Vagina (tissue), 2 donors: ENCODE measurements at regions of chr3 and their contacts with region 1.

Region 1: DNA sequence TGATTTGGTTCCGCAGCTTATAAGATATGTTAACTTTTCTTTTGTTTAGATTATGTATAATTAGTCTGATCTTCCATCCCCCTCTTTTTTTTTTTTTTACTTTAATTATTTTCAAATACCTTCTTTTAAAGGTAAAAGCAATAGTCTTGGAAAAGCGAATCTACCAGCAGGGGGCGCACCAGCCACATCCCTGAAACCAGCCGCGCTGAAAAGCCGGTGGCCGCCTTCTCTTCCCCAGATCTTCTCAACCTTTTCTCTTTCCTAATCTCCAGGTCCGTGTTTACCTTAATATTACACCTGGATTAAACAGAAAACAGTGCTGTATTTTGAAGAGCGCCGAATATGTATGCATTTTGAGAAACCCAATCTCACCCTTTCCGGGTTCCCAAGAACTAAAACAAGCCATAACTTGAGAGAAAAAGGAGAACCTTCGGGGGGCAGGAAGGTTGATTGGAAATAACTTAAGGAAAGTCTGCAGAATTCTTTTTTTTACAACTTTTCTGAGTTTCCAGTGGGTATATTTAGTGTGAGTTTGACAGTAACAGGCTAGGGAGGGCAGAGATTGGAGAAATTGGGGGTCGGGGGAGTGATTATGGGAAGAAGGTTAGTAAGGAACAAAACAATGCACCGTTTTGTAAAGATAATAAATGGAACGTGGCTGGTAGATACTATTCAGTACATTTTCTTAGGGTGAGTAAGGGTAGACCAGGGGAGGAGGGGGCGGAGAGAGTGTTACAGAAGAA is 2.0 kb upstream of the SOX2 start:
- DNase-seq: no peak
- H3K4me3 ChIP-seq: no peak overlapping the region
- H3K27ac ChIP-seq: no peak overlapping the region
- H3K4me1 ChIP-seq: peaks cover 25% of the 10 kb centered on the region
- H3K27me3 ChIP-seq: peaks cover 11% of the 10 kb centered on the region
- CTCF ChIP-seq: peak in 2 of 3 experiments; percentile 57 to 68
- POLR2A ChIP-seq: no peak

Region 2: DNA sequence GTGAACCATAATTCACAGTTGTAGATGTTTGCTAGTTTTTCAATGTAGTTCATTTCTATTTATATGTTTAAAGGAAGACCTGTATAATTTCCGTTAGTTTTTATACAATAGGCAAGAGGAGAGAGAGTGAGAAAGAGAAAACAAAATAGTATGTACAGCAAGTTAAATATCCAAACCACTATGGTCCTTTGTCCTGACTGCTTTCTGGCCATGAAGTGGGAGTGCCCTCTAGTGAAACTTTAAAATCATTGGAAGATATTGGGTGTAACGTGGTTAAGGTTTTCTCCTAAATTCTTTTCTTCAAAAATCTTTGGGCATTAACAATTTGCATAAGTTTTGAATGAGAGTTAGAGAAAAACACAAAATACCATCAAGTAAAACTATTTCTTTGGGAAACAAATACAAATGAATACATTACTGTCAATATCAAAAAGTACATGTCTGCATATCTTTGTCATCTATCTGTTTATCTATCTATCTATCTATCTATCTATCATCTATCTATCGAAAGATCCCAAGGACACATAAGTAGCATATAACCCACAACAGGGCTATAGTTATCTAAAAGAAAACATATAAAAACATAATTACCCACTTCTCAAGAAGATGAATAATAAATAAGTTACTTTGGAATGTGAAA is 549.0 kb after region 1 on chr3:
- intact Hi-C with region 1: loop called (anchors 10 kb)
- DNase-seq: no peak
- H3K4me3 ChIP-seq: no peak overlapping the region
- H3K27ac ChIP-seq: no peak overlapping the region
- H3K4me1 ChIP-seq: no peaks in the 10 kb centered on the region
- H3K27me3 ChIP-seq: no peaks in the 10 kb centered on the region
- CTCF ChIP-seq: peak in 2 of 3 experiments; percentile 28 to 30
- POLR2A ChIP-seq: no peak

Region 3: DNA sequence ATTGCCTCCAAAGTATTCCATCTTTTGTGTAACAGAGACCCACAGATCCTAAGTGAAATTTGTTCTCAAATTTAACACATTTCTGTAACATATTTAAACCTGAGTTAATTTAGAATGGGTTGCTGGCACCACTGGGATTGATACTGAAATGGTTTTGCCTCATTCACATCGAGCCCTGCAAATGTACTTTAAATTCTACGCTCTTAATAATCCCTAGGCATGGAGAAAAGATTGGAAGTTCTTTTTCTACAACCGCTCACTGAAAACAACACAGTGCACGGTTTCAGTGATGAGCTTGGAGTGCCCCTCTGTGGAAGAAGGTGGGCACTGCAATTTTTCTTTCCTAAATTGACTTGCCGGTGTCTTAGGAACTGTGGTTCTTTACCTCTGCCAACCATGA is 973.7 kb after region 1 on chr3:
- intact Hi-C with region 1: loop called (anchors 5 kb)
- DNase-seq: no peak
- H3K4me3 ChIP-seq: peak overlapping the region in 1 of 2 donors; percentile 55
- H3K27ac ChIP-seq: no peak overlapping the region
- H3K4me1 ChIP-seq: peaks cover 16% of the 10 kb centered on the region
- H3K27me3 ChIP-seq: no peaks in the 10 kb centered on the region
- CTCF ChIP-seq: peak; percentile 21 to 78 (median 78)
- POLR2A ChIP-seq: no peak